RWPE1 (cell line): ENCODE measurements at regions of chr4 and their contacts with region 1.

Region 1: DNA sequence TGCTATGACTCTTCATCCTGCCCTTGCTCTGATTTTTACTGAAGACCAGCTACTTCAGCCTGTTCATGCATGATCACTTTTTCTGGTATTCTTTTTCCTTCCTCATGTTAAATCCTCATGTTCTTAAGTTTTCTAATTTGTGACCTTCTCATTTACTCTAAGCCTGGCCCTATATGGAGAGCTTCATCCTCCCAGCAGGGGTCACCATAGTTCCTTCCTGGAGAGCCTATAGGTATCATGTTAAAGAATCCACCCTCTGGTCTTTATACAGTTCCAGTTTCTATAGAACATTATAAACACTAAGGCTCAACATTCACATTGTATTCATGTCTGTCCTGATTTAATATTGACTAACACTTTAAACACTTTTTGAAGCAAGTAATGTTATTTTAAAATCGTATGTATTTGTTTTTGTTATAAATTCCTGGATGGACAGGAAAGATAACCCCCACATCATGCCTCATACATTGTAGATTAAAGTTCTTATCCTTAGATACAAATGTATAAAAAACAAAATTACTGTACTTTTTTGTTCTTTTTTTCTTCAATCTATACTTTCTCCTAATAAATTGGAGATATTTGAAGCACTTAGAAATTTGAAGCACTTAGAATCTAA is 53.8 kb upstream of the OTUD4 start:
- DNase-seq: peak; percentile 76
- H3K27ac ChIP-seq: no peak overlapping the region
- CTCF ChIP-seq: peak; percentile 87

Region 2: DNA sequence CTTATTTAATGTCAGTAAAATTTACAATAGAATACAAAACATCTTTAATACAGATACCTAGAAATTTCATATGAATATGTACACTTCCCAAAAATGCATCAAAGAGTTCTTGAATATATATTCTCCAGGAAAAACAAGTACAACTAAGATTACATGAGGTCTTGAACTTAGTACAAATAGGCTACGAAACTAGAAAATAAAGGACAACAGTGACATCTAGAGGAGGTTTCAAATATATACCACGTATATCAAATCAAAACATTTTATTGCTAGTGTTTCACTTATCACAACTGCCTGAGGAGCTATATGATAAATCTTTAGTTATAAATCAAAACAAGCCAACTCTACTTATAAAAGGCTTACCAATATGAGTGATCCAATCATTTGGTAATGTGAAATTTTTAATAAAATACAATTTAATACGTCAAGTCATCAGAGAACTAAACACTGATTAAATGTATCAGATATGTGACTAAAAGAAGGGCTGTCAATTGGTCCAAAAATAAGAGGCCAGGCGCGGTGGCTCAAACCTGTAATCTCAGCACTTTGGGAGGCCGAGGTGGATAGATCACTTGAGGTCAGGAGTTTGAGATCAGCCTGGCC is 172.8 kb before region 1 on chr4:
- CTCF ChIA-PET with region 1: no interaction called
- POLR2A ChIA-PET with region 1: no interaction called
- DNase-seq: peak; percentile 19
- H3K27ac ChIP-seq: no peak overlapping the region
- CTCF ChIP-seq: peak; percentile 48

Region 3: GRCh38 chr4:145216535-145216934 is 17.7 kb before region 1 on chr4:
- CTCF ChIA-PET with region 1: interaction called, 10 read pairs
- POLR2A ChIA-PET with region 1: no interaction called
- DNase-seq: peak; percentile 34
- H3K27ac ChIP-seq: no peak overlapping the region
- CTCF ChIP-seq: peak; percentile 65

Region 4: DNA sequence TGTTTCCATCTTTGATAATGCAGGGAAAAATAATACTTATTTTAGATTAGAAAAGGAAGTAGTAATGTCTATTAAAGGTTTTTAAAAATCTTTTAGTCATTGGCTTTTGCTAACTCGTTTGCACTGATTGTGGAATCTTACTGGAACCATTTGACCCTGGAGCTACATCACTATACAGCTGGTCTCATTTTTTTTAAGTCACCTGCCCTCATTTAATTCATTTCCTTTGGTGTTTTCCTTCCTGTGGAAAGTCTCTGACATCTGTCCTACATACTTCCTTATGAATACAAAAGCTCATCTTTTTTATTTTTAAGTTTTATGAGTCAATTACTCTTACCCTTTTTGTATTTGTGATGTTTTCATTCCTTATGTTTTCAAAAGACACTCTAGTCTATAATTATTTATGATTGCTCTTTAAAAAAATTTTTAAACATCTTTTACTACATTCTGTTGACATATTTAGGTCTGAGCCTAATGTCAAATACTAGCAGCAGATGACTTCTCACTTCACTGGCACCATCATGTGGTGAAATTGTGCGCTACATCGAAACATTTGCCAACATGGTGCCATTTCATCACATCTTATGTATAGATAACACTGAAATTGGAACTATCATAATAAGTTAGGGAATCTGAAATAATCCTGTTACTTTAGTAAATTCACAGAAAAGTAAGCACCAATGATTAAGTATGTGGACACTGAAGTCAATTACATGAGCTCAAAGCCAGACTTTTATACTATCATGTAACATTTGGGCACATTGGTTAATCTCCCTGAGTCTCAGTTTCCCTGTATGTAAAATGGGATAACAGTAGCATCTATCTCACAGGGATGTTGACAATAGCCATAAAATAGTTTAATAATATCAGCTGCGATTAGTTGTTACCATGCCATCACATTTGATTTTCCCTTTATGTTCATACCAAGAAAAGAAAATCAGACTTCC is 375.6 kb after region 1 on chr4:
- CTCF ChIA-PET with region 1: interaction called, 27 read pairs
- POLR2A ChIA-PET with region 1: no interaction called
- DNase-seq: peak; percentile 49
- H3K27ac ChIP-seq: no peak overlapping the region
- CTCF ChIP-seq: peak; percentile 87

Region 5: DNA sequence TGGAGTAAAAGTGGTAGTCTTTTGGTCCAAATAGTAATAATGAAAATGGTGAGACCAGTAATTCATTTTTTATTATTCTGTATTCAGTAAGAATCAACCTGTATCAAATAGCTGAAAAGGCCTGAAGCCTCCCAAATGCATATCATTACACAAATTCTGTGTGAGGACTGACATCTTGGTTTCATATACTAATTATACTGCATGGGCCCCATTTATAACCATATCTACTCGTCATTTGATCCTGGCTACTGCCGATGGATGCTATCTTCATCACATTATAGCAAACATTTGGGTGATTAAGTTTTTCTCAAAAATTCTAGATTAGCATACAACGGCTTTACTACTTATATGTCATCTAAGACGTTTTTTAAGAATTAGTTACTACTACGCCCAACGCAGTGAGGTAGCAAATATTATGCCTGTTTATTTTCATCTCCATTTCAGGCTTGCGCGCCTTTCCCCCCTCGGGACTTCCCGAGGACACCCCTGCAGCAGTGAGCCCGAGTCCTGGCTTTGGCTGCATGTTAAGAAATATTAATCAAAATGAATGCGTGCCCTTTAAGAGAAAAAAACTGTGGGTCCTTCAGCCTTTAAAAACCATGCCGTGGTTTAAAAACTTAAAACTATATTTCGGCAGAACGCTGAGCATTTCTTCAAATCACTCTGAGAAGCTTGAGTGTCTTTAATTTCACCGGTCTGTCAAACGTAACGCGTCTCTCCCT is 384.2 kb after region 1 on chr4:
- CTCF ChIA-PET with region 1: interaction called, 14 read pairs
- POLR2A ChIA-PET with region 1: no interaction called
- DNase-seq: peak; percentile 13
- H3K27ac ChIP-seq: peak overlapping the region; percentile 91
- CTCF ChIP-seq: no peak